ENCODE measurements at regions of chr6 and their contacts with region 1.

Region 1: DNA sequence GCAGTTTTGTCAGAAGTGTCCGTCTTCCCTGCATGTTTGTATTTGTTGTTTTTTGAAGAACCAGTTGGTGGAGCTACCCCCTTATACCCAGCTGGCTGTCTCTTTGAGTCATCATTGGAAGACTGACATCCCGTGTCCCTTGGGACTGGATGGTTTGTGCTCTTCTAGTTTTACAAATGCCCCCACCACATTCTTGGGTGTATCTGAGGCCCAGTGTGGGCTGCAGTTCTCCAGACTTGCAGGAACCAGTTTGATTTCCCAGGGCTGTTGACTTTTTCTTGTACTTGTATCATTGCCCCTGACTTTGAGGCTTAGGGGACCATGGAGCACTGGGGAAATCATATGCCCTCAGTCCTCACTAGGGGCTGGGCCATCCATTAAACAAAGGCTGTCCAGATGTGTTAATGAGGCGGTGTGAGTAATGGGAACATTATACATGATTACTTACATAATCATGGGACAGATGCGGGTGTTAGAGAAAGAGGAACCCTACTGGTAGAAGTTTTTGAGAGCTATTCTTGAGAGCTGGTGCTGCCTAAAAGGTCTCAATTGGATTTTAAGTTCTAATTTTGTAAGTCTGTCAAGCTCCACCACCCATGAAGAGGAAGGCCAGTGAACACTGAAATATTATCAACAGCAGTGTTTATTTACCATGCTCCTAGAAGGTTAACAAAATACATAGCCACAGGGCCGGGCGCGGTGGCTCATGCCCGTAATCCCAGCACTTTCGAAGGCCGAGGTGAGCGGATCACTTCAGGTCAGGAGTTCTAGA is 8.4 kb downstream of the JARID2 start:
- DNase-seq: no peak
- ATAC-seq: no peak
- H3K4me3 ChIP-seq: no peak overlapping the region
- H3K4me3 Mint-ChIP-seq: peak overlapping the region in 1 of 3 donors; percentile 99
- H3K27ac ChIP-seq: peak overlapping the region; percentile 36
- H3K27ac Mint-ChIP-seq: peak overlapping the region; percentile 75 to 83
- H3K4me1 ChIP-seq: peaks cover 27 to 50% of the 10 kb centered on the region in 2 experiments
- H3K4me1 Mint-ChIP-seq: peaks cover 98 to 100% (median 99%) of the 10 kb centered on the region in 3 donors
- H3K27me3 ChIP-seq: no peaks in the 10 kb centered on the region
- H3K27me3 Mint-ChIP-seq: no peaks in the 10 kb centered on the region

Region 2: DNA sequence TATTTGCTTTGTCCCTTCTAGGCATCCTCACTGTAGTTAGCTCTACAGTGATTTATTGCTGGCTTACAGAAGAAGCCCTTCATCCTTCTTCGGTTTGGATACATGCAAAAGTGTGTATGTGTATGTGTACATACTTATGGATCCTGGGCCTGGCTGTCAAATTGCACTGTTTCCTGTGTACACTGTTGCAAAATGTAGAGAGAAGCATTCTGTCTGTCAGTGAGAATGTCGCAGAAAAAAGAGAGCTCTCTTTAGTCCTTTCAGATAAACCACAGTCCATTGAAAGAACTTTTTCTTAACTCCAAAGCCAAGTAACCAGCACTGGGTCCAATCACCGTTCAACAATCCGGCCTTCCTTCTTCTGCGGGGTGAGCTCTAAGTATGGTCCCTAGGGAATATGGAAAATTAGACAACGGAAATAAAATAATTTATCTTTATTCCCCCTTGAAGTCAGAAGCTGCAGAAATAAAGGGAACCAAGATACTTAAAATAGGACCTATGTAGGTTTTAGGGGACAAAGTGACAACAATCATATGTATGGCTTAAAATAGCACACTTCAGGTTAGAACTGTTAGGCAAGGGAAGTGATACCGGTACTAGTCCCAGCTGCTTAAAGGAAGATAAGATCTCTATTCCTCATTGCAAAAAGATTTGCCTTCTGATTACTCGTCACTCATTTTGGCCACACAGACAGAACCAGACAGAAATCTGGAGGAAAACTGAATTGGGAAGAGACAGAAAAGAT is 1029.7 kb before region 1 on chr6:
- CTCF ChIA-PET with region 1: no interaction called
- POLR2A ChIA-PET with region 1: interaction called in 1 of 2 experiments, 16 read pairs
- DNase-seq: no peak
- ATAC-seq: no peak
- H3K4me3 ChIP-seq: no peak overlapping the region
- H3K4me3 Mint-ChIP-seq: no peak overlapping the region
- H3K27ac ChIP-seq: no peak overlapping the region
- H3K27ac Mint-ChIP-seq: no peak overlapping the region
- H3K4me1 ChIP-seq: peaks cover 6 to 10% of the 10 kb centered on the region in 2 experiments
- H3K4me1 Mint-ChIP-seq: peaks cover 12 to 16% (median 15%) of the 10 kb centered on the region in 3 donors
- H3K27me3 ChIP-seq: peaks cover 0 to 4% of the 10 kb centered on the region in 2 experiments
- H3K27me3 Mint-ChIP-seq: peaks cover 0 to 5% of the 10 kb centered on the region in 2 donors

Region 3: DNA sequence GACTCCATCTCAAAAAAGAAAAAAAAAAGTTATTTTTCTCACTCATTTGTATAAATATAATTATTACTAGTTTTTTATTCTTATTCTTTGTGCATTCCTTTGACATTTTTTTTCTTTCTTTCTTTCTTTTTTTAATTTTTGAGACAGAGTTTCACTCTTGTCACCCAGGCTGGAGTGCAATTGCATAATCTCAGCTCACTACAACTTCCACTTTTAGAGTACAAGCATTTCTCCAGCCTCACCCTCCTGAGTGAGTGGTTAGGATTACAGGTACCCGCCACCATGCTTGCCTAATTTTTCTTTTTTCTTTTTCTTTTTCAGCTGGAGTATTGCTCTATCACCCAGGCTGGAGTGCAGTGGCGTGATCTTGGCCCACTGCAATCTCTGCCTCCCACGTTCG is 59.8 kb before region 1 on chr6:
- CTCF ChIA-PET with region 1: no interaction called
- POLR2A ChIA-PET with region 1: no interaction called
- DNase-seq: no peak
- ATAC-seq: no peak
- H3K4me3 ChIP-seq: no peak overlapping the region
- H3K4me3 Mint-ChIP-seq: no peak overlapping the region
- H3K27ac ChIP-seq: no peak overlapping the region
- H3K27ac Mint-ChIP-seq: no peak overlapping the region
- H3K4me1 ChIP-seq: no peaks in the 10 kb centered on the region
- H3K4me1 Mint-ChIP-seq: no peaks in the 10 kb centered on the region
- H3K27me3 ChIP-seq: no peaks in the 10 kb centered on the region
- H3K27me3 Mint-ChIP-seq: no peaks in the 10 kb centered on the region

Region 4: GRCh38 chr6:15227827-15228318 is 26.4 kb before region 1 on chr6:
- CTCF ChIA-PET with region 1: interaction called in 1 of 2 experiments, 10 read pairs
- POLR2A ChIA-PET with region 1: no interaction called
- DNase-seq: no peak
- ATAC-seq: no peak
- H3K4me3 ChIP-seq: no peak overlapping the region
- H3K4me3 Mint-ChIP-seq: no peak overlapping the region
- H3K27ac ChIP-seq: no peak overlapping the region
- H3K27ac Mint-ChIP-seq: no peak overlapping the region
- H3K4me1 ChIP-seq: no peaks in the 10 kb centered on the region
- H3K4me1 Mint-ChIP-seq: no peaks in the 10 kb centered on the region
- H3K27me3 ChIP-seq: no peaks in the 10 kb centered on the region
- H3K27me3 Mint-ChIP-seq: no peaks in the 10 kb centered on the region

Region 5: GRCh38 chr6:15434823-15435380 is 180.6 kb after region 1 on chr6:
- CTCF ChIA-PET with region 1: no interaction called
- POLR2A ChIA-PET with region 1: interaction called in 1 of 2 experiments, 10 read pairs
- DNase-seq: no peak
- ATAC-seq: no peak
- H3K4me3 ChIP-seq: no peak overlapping the region
- H3K4me3 Mint-ChIP-seq: peak overlapping the region in 1 of 3 donors; percentile 50
- H3K27ac ChIP-seq: peak overlapping the region; percentile 7
- H3K27ac Mint-ChIP-seq: peak overlapping the region; percentile 62 to 72
- H3K4me1 ChIP-seq: peaks cover 52 to 55% of the 10 kb centered on the region in 2 experiments
- H3K4me1 Mint-ChIP-seq: peaks cover 88 to 96% (median 94%) of the 10 kb centered on the region in 3 donors
- H3K27me3 ChIP-seq: no peaks in the 10 kb centered on the region
- H3K27me3 Mint-ChIP-seq: no peaks in the 10 kb centered on the region

Measured in T-cell (primary cell).